Lower leg skin (tissue), 4 donors: ENCODE measurements at regions of chr5 and their contacts with region 1.

Region 1: GRCh38 chr5:137206030-137206715 is 293.0 kb downstream of the SPOCK1 start:
- DNase-seq: no peak
- H3K4me3 ChIP-seq: no peak overlapping the region
- CTCF ChIP-seq: no peak
- POLR2A ChIP-seq: no peak

Region 2: GRCh38 chr5:137234973-137235943 is 29.1 kb after region 1 on chr5:
- intact Hi-C with region 1: loop called (anchors 1 kb)
- DNase-seq: no peak
- H3K4me3 ChIP-seq: no peak overlapping the region
- CTCF ChIP-seq: no peak
- POLR2A ChIP-seq: no peak

Region 3: DNA sequence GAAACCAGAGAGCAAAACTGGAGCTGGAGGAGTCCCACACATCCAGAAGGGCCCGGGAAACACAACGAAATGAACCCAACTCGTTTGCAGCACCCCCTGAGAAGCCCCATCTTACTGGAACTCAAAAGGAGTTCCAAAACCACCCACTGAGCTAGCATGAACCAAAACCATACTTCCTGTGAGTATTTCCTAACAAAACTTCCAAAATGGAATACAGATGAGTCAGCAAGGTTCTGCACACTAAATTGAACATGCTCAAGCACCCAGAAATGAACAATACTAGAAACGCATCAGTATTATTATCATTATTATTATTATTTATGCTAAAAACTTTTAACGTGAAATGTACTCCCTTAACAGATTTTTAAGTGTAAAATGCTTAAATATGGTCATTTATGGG is 301.0 kb after region 1 on chr5:
- intact Hi-C with region 1: no loop called
- DNase-seq: no peak
- H3K4me3 ChIP-seq: no peak overlapping the region
- CTCF ChIP-seq: no peak
- POLR2A ChIP-seq: no peak